Activated naive CD4-positive, alpha-beta T cell treated with anti-CD3 and anti-CD28 coated beads for 36 hours (primary cell): ENCODE measurements at regions of chr15 and their contacts with region 1.

Region 1: GRCh38 chr15:66700802-66701421 is 1.1 kb upstream of the SMAD6 start:
- DNase-seq: peak; percentile 85
- H3K4me3 Mint-ChIP-seq: peak overlapping the region; percentile 85
- H3K27ac Mint-ChIP-seq: peak overlapping the region; percentile 42
- H3K4me1 Mint-ChIP-seq: peaks cover 11% of the 10 kb centered on the region
- H3K27me3 Mint-ChIP-seq: peaks cover 13% of the 10 kb centered on the region

Region 2: DNA sequence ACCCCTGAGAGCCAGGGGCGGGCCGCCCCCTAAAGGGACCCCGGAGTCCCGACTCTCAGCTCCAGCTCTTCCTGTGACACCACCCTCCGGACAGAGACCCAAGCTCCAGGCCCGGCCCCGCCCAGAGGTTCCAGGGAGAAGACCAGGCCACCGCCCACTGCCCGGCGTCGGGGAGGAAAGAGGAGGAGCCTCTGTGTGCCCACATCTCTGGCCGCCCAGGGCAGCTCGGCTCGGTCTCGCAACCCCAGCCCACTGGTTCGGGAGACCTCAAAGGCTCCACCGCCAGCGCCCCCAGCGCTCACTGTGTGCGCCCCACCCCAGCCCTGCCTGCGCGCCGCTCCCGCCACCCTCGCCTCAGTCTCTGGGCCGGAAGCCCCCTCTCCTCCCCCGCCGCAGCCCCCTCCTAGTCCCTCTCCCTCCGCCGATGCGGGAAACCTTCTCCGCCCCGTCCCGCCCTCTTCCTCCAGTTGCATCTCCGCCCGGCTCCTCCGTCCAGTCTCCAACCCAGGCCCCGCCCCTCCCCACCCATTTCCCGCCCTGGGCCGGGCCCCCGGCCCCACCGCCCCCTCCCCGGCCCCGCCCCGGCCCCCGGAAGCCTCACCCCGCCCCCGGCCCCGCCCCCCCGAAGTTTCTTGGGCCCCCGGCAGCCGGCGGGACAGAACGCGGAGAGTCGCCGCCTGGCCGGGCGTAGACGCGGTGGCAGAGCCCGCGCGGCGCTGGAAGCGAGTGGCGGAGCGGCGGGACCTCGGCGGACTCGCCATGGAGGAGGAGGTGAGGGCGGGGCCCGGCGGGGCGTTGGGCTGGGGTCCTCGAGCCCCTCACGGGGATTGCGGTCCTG is 1859.4 kb before region 1 on chr15 and contains the start of gene PLEKHO2:
- CTCF ChIA-PET with region 1: no interaction called
- intact Hi-C with region 1: loop called (anchors 5 kb)
- DNase-seq: peak; percentile 95
- H3K4me3 Mint-ChIP-seq: peak within 1 kb of the TSS; percentile 96
- H3K27ac Mint-ChIP-seq: peak within 1 kb of the TSS; percentile 83
- H3K4me1 Mint-ChIP-seq: peaks cover 60% of the 10 kb centered on the region
- H3K27me3 Mint-ChIP-seq: no peaks in the 10 kb centered on the region
- total RNA-seq, gene PLEKHO2: 12.5 to 12.7 TPM

Region 3: GRCh38 chr15:66504563-66505429 is 196.1 kb before region 1 on chr15 and contains the starts of genes RPL4 and ZWILCH:
- CTCF ChIA-PET with region 1: no interaction called
- intact Hi-C with region 1: loop called (anchors 5 kb)
- DNase-seq: peak; percentile 77
- H3K4me3 Mint-ChIP-seq: peak within 1 kb of the TSS; percentile 99
- H3K27ac Mint-ChIP-seq: peak within 1 kb of the TSS; percentile 98
- H3K4me1 Mint-ChIP-seq: peaks cover 50% of the 10 kb centered on the region
- H3K27me3 Mint-ChIP-seq: no peaks in the 10 kb centered on the region
- total RNA-seq, gene RPL4: 6,298 to 6,391 TPM
- total RNA-seq, gene ZWILCH: 21.6 to 23.3 TPM

Region 4: GRCh38 chr15:66578286-66578875 is 122.5 kb before region 1 on chr15:
- CTCF ChIA-PET with region 1: no interaction called
- intact Hi-C with region 1: no loop called
- DNase-seq: no peak
- H3K4me3 Mint-ChIP-seq: no peak overlapping the region
- H3K27ac Mint-ChIP-seq: no peak overlapping the region
- H3K4me1 Mint-ChIP-seq: peaks cover 2% of the 10 kb centered on the region
- H3K27me3 Mint-ChIP-seq: no peaks in the 10 kb centered on the region

Region 5: DNA sequence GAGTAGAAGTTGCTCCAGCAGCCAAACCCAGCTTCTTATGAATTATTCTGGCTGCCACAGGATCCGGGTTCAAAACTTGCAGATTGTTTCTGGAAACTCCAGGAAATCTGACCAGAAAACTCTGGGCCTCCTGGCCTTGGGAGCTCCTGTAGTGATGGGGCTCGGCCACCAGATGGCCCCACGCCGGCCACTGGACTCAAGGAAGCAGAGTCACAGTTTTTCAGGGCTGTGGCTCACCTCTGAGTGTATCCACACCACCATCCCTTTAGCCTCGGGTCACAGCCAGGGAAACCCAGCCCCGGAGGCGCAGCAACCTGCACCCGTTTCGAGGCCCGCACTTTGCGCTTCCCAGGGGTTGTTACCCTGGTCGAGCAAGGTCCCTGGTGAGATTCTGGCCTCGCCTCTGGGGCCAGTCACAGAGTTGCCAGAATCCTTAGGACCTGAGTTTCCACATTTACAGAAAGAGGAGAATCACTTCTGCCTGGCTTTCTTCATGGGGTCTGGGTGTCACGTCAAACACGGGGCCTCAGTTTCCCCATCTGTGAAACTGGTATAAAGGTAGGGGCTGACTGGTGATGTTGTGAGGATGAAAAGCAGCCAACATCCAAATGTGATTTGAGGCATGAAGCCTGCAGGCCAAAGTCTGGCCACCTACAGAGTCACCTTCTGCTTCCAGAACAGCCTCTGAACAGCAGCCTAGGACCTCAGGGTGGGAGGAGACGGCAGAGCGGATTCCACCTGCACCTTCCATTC is 81.6 kb before region 1 on chr15:
- CTCF ChIA-PET with region 1: interaction called, 4 read pairs
- intact Hi-C with region 1: loop called (anchors 1 kb)
- DNase-seq: peak; percentile 61
- H3K4me3 Mint-ChIP-seq: no peak overlapping the region
- H3K27ac Mint-ChIP-seq: no peak overlapping the region
- H3K4me1 Mint-ChIP-seq: peaks cover 4% of the 10 kb centered on the region
- H3K27me3 Mint-ChIP-seq: peaks cover 20% of the 10 kb centered on the region

Region 6: GRCh38 chr15:66654739-66655375 is 46.1 kb before region 1 on chr15:
- CTCF ChIA-PET with region 1: no interaction called
- intact Hi-C with region 1: loop called (anchors 10 kb)
- DNase-seq: peak; percentile 56
- H3K4me3 Mint-ChIP-seq: no peak overlapping the region
- H3K27ac Mint-ChIP-seq: no peak overlapping the region
- H3K4me1 Mint-ChIP-seq: peaks cover 9% of the 10 kb centered on the region
- H3K27me3 Mint-ChIP-seq: no peaks in the 10 kb centered on the region